ENCODE measurements at regions of chr21 and their contacts with region 1.

Region 1: GRCh38 chr21:41121785-41122421 is 46.1 kb upstream of the BACE2 start:
- DNase-seq: peak; percentile 96
- ATAC-seq: peak; percentile 98
- H3K4me3 ChIP-seq: no peak overlapping the region
- H3K27ac ChIP-seq: no peak overlapping the region
- H3K4me1 ChIP-seq: no peaks in the 10 kb centered on the region
- H3K27me3 ChIP-seq: peaks cover 32% of the 10 kb centered on the region; the same call in 1 of the 2 replicates
- CTCF ChIP-seq: peak; percentile 97

Region 2: GRCh38 chr21:41167348-41168342 is 45.7 kb after region 1 on chr21 and contains the start of gene BACE2:
- CTCF ChIA-PET with region 1: no interaction called
- POLR2A ChIA-PET with region 1: no interaction called
- intact Hi-C with region 1: loop called (anchors 2 kb)
- DNase-seq: peak; percentile 74
- ATAC-seq: peak; percentile 57
- H3K4me3 ChIP-seq: peak within 1 kb of the TSS; percentile 80
- H3K27ac ChIP-seq: peak within 1 kb of the TSS; percentile 55
- H3K4me1 ChIP-seq: peaks cover 51% of the 10 kb centered on the region
- H3K27me3 ChIP-seq: no peaks in the 10 kb centered on the region
- CTCF ChIP-seq: peak; percentile 64
- total RNA-seq, gene BACE2: 89.2 and 96.2 TPM in 2 replicates

Region 3: DNA sequence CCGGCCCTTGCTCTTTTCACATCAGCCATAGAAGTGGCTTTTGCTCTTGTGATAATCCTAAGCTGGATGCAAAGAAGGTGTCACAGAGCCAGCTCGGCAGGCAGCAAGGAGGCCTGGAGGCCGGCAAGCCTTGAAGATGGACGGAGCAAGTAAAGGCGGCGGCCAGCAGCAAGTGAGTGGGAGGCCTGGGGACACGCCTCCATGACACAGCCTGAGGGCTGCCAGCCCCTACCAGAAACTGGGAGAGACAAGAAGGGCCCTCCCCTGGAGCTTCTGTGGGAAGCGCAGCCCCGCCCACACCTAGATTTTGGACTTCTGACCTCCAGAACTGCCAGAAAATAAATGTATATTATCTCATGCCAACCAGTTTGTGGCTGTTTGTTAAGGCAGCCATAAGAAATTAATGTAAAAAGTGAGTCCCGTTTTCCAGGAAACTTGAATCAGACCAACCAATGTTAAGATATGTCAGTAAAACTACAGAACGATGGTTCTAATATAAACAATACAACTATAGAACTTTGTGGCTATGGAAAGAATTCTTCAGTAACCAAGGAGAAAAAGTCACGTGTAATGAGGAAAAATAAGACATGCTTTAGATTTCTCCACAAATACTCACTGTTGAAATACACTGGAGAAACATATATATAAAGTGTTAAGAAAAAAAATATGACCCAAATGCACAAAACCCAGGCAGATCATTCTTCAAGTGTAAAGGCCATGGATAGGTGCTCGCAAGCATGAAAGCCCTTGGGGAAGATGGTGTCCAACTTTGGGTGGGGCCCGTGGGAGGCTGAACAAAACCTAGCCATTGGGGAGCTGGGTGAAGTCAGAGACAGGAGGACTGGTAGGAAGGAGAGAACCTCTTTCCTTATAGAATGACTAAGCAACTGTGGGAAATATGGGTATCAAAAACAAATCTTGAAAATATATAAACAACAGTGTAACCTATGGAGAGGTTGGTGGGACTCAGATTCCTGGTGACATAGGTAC is 96.1 kb after region 1 on chr21:
- CTCF ChIA-PET with region 1: no interaction called
- POLR2A ChIA-PET with region 1: no interaction called
- intact Hi-C with region 1: loop called (anchors 10 kb)
- DNase-seq: no peak
- ATAC-seq: no peak
- H3K4me3 ChIP-seq: no peak overlapping the region
- H3K27ac ChIP-seq: no peak overlapping the region
- H3K4me1 ChIP-seq: peaks cover 15% of the 10 kb centered on the region
- H3K27me3 ChIP-seq: no peaks in the 10 kb centered on the region
- CTCF ChIP-seq: no peak

Region 4: DNA sequence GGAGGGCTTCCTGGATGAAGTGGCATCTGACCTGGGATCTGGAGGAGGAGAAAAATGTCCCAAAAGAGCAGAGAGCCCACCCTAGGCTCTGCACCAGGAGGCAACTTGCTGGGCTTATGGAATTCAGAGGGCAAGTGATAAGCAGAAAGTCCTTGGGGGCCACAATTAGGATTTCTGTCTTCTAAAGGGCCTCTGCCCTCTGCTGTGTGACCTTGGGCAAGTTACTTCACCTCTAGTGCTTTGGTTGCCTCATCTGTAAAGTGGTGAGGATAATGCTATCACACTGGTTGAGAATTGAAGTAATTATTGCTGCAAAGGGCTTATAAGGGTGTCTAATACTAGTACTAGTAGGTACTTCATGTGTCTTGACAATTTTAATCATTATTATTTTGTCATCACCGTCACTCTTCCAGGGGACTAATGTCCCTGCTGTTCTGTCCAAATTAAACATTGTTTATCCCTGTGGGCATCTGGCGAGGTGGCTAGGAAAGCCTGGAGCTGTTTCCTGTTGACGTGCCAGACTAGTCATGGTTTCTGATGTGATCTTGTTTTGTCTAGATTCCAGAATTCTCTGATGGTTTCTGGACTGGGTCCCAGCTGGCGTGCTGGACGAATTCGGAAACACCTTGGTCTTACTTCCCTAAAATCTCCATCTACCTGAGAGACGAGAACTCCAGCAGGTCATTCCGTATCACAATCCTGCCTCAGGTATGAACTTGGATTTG is 128.5 kb after region 1 on chr21:
- CTCF ChIA-PET with region 1: no interaction called
- POLR2A ChIA-PET with region 1: no interaction called
- intact Hi-C with region 1: loop called (anchors 10 kb)
- DNase-seq: peak; percentile 59
- ATAC-seq: peak; percentile 59
- H3K4me3 ChIP-seq: no peak overlapping the region
- H3K27ac ChIP-seq: peak overlapping the region; percentile 71
- H3K4me1 ChIP-seq: peaks cover 44% of the 10 kb centered on the region
- H3K27me3 ChIP-seq: no peaks in the 10 kb centered on the region
- CTCF ChIP-seq: no peak

Region 5: DNA sequence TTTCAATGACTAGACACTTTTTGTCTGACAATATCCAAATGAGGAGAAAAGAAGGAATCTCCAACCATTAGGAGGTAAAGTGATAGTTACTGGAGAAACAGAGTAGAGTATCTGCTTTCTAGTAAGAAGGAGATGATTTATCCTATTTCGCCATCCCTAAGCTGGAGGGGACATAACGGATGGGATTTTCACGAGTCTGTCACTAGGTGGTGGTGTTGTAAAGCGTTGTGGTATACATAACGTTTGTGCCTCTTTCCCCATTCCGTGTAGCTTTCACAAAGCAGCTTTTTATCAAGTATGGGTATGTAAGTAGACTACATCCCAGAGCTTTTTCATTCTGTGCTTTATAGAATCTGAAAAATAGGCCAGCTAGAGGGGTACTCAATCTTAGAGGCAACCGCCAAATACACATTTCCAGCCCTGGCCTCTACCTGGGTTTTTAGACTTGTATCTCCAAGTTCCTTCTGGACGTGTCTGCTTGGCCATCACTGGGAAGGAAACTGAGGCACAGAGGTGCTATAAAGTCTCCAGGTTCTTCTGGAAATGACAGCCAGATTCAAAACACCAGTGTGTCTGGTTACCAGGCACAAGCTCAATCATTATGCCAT is 161.4 kb after region 1 on chr21:
- CTCF ChIA-PET with region 1: interaction called, 6 read pairs
- POLR2A ChIA-PET with region 1: no interaction called
- intact Hi-C with region 1: loop called (anchors 1 kb)
- DNase-seq: peak; percentile 90
- ATAC-seq: peak; percentile 99
- H3K4me3 ChIP-seq: no peak overlapping the region
- H3K27ac ChIP-seq: no peak overlapping the region
- H3K4me1 ChIP-seq: no peaks in the 10 kb centered on the region
- H3K27me3 ChIP-seq: no peaks in the 10 kb centered on the region
- CTCF ChIP-seq: peak; percentile 92

Region 6: GRCh38 chr21:41361786-41362604 is 240.1 kb after region 1 on chr21 and contains the start of gene MX2:
- CTCF ChIA-PET with region 1: no interaction called
- POLR2A ChIA-PET with region 1: no interaction called
- intact Hi-C with region 1: loop called (anchors 5 kb)
- DNase-seq: peak; percentile 48
- ATAC-seq: peak; percentile 25
- H3K4me3 ChIP-seq: peak within 1 kb of the TSS; percentile 25; the same call in 1 of the 2 replicates
- H3K27ac ChIP-seq: no peak within 1 kb of the TSS
- H3K4me1 ChIP-seq: peaks cover 9% of the 10 kb centered on the region
- H3K27me3 ChIP-seq: peaks cover 4% of the 10 kb centered on the region
- CTCF ChIP-seq: no peak
- total RNA-seq, gene MX2: 0.15 and 0.46 TPM in 2 replicates

Region 7: GRCh38 chr21:41460578-41461527 is 338.9 kb after region 1 on chr21:
- CTCF ChIA-PET with region 1: no interaction called
- POLR2A ChIA-PET with region 1: no interaction called
- intact Hi-C with region 1: loop called (anchors 2 kb)
- DNase-seq: peak; percentile 73
- ATAC-seq: peak; percentile 90
- H3K4me3 ChIP-seq: no peak overlapping the region
- H3K27ac ChIP-seq: no peak overlapping the region
- H3K4me1 ChIP-seq: 0 out of 2 replicates have a peak, but pooled peaks cover 4% of the 10 kb centered on the region
- H3K27me3 ChIP-seq: no peaks in the 10 kb centered on the region
- CTCF ChIP-seq: peak; percentile 91

Region 8: GRCh38 chr21:41663801-41664788 is 542.2 kb after region 1 on chr21:
- CTCF ChIA-PET with region 1: no interaction called
- POLR2A ChIA-PET with region 1: no interaction called
- intact Hi-C with region 1: no loop called
- DNase-seq: peak; percentile 63
- ATAC-seq: peak; percentile 60
- H3K4me3 ChIP-seq: no peak overlapping the region; the same call in 1 of the 2 replicates
- H3K27ac ChIP-seq: peak overlapping the region; percentile 89
- H3K4me1 ChIP-seq: peaks cover 34% of the 10 kb centered on the region
- H3K27me3 ChIP-seq: no peaks in the 10 kb centered on the region
- CTCF ChIP-seq: no peak

Measured in PC-3 (cell line).